ENCODE measurements at regions of chr3 and their contacts with region 1.

Region 1: GRCh38 chr3:123201566-123202427 is at the start of gene SEC22A:
- DNase-seq: peak; percentile 91 to 98
- ATAC-seq: peak; percentile 93 to 98 (median 93)
- H3K4me3 ChIP-seq: peak within 1 kb of the TSS; percentile 87
- H3K4me3 Mint-ChIP-seq: peak within 1 kb of the TSS; percentile 95
- H3K27ac ChIP-seq: peak within 1 kb of the TSS; percentile 95
- H3K27ac Mint-ChIP-seq: peak within 1 kb of the TSS; percentile 96 to 98
- H3K4me1 ChIP-seq: peaks cover 15% of the 10 kb centered on the region
- H3K4me1 Mint-ChIP-seq: peaks cover 22 to 26% of the 10 kb centered on the region in 2 donors
- H3K27me3 ChIP-seq: no peaks in the 10 kb centered on the region
- H3K27me3 Mint-ChIP-seq: peaks cover 0 to 3% of the 10 kb centered on the region in 2 donors
- CTCF ChIP-seq: no peak
- total RNA-seq, gene SEC22A: 16.4 to 21.2 (median 17.0) TPM

Region 2: GRCh38 chr3:122427857-122428471 is 773.8 kb before region 1 on chr3:
- intact Hi-C with region 1: no loop called
- DNase-seq: no peak
- ATAC-seq: no peak
- H3K4me3 ChIP-seq: no peak overlapping the region
- H3K4me3 Mint-ChIP-seq: no peak overlapping the region
- H3K27ac ChIP-seq: no peak overlapping the region
- H3K27ac Mint-ChIP-seq: peak overlapping the region; percentile 31 to 73
- H3K4me1 ChIP-seq: no peaks in the 10 kb centered on the region
- H3K4me1 Mint-ChIP-seq: peaks cover 13 to 14% of the 10 kb centered on the region in 2 donors
- H3K27me3 ChIP-seq: no peaks in the 10 kb centered on the region
- H3K27me3 Mint-ChIP-seq: no peaks in the 10 kb centered on the region
- CTCF ChIP-seq: no peak

Region 3: GRCh38 chr3:122793568-122794416 is 408.0 kb before region 1 on chr3 and contains the start of gene HSPBAP1:
- intact Hi-C with region 1: loop called (anchors 5 kb)
- DNase-seq: peak; percentile 92 to 95
- ATAC-seq: peak; percentile 67 to 83 (median 78)
- H3K4me3 ChIP-seq: peak within 1 kb of the TSS; percentile 77
- H3K4me3 Mint-ChIP-seq: peak within 1 kb of the TSS; percentile 94
- H3K27ac ChIP-seq: peak within 1 kb of the TSS; percentile 96
- H3K27ac Mint-ChIP-seq: no peak within 1 kb of the TSS
- H3K4me1 ChIP-seq: peaks cover 21% of the 10 kb centered on the region
- H3K4me1 Mint-ChIP-seq: peaks cover 20 to 25% of the 10 kb centered on the region in 2 donors
- H3K27me3 ChIP-seq: no peaks in the 10 kb centered on the region
- H3K27me3 Mint-ChIP-seq: no peaks in the 10 kb centered on the region
- CTCF ChIP-seq: no peak
- total RNA-seq, gene HSPBAP1: 19.7 to 24.7 (median 23.4) TPM

Region 4: GRCh38 chr3:123046262-123047061 is 155.3 kb before region 1 on chr3:
- intact Hi-C with region 1: no loop called
- DNase-seq: no peak
- ATAC-seq: no peak
- H3K4me3 ChIP-seq: no peak overlapping the region
- H3K4me3 Mint-ChIP-seq: no peak overlapping the region
- H3K27ac ChIP-seq: no peak overlapping the region
- H3K27ac Mint-ChIP-seq: no peak overlapping the region
- H3K4me1 ChIP-seq: no peaks in the 10 kb centered on the region
- H3K4me1 Mint-ChIP-seq: no peaks in the 10 kb centered on the region
- H3K27me3 ChIP-seq: no peaks in the 10 kb centered on the region
- H3K27me3 Mint-ChIP-seq: peaks cover 3 to 30% of the 10 kb centered on the region in 2 donors
- CTCF ChIP-seq: no peak

Region 5: DNA sequence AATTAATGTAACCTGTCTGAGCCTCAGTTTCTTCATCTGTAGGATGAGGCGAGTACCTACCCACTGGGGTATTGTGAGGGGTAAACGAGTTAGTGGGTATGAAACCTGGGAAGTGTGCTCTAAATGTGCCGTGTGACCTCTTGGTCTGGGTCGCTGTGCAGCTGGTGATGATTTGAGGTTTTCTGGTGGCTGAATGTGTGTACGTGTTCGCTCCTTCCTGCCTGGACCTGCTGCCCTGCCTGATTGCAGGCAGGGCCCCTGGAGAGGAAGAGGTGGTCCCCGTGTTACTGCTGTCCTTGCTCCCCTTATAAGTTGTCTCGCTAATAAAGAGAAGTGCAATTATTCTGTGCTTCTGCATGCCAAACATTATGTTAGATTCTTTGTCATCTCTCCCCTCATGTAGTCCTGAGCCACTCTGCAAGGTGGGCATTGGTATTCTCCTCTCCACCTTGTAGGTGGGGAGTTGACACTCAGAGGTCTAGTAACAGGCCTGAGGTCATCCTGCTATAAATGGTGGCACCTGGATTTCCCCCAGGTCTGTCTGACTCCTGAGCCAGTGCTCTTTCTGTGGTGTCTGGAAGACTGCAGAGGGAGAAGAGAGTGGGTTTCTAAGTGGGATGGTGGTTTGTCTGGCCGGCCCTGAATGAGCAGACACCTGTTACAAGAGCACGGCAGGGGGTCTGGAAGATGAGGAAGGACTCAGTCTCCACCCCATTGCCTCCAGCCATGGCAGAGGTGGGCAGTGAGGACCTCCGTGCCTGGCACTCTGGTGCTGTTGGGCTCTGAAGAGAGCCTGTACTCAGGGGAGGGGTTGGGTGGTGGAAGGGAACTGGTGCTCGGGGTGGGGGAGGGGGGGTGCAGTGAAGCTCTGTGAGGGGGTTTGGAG is 119.2 kb before region 1 on chr3:
- intact Hi-C with region 1: no loop called
- DNase-seq: no peak
- ATAC-seq: peak in 1 of 3 donors; percentile 45
- H3K4me3 ChIP-seq: no peak overlapping the region
- H3K4me3 Mint-ChIP-seq: no peak overlapping the region
- H3K27ac ChIP-seq: no peak overlapping the region
- H3K27ac Mint-ChIP-seq: peak overlapping the region in 1 of 2 donors; percentile 25
- H3K4me1 ChIP-seq: peaks cover 28% of the 10 kb centered on the region
- H3K4me1 Mint-ChIP-seq: peaks cover 19 to 32% of the 10 kb centered on the region in 2 donors
- H3K27me3 ChIP-seq: no peaks in the 10 kb centered on the region
- H3K27me3 Mint-ChIP-seq: peaks cover 2 to 12% of the 10 kb centered on the region in 2 donors
- CTCF ChIP-seq: no peak

Region 6: GRCh38 chr3:123584988-123585937 is 383.5 kb after region 1 on chr3 and contains the start of gene HACD2:
- intact Hi-C with region 1: loop called (anchors 1 kb)
- DNase-seq: peak; percentile 95 to 96
- ATAC-seq: peak; percentile 92 to 99 (median 93)
- H3K4me3 ChIP-seq: peak within 1 kb of the TSS; percentile 83
- H3K4me3 Mint-ChIP-seq: peak within 1 kb of the TSS; percentile 87
- H3K27ac ChIP-seq: peak within 1 kb of the TSS; percentile 95
- H3K27ac Mint-ChIP-seq: peak within 1 kb of the TSS in 1 of 2 donors; percentile 71
- H3K4me1 ChIP-seq: peaks cover 13% of the 10 kb centered on the region
- H3K4me1 Mint-ChIP-seq: peaks cover 15 to 22% of the 10 kb centered on the region in 2 donors
- H3K27me3 ChIP-seq: no peaks in the 10 kb centered on the region
- H3K27me3 Mint-ChIP-seq: no peaks in the 10 kb centered on the region
- CTCF ChIP-seq: no peak
- total RNA-seq, gene HACD2: 16.1 to 34.1 (median 24.6) TPM

Region 7: GRCh38 chr3:123816673-123817207 is 614.9 kb after region 1 on chr3:
- intact Hi-C with region 1: no loop called
- DNase-seq: no peak
- ATAC-seq: no peak
- H3K4me3 ChIP-seq: no peak overlapping the region
- H3K4me3 Mint-ChIP-seq: no peak overlapping the region
- H3K27ac ChIP-seq: no peak overlapping the region
- H3K27ac Mint-ChIP-seq: no peak overlapping the region
- H3K4me1 ChIP-seq: no peaks in the 10 kb centered on the region
- H3K4me1 Mint-ChIP-seq: no peaks in the 10 kb centered on the region
- H3K27me3 ChIP-seq: no peaks in the 10 kb centered on the region
- H3K27me3 Mint-ChIP-seq: no peaks in the 10 kb centered on the region
- CTCF ChIP-seq: no peak

Measured in natural killer cell (primary cell).